ENCODE measurements at regions of chr9 and their contacts with region 1.

Region 1: GRCh38 chr9:109119439-109120203 is at the start of gene TMEM245:
- DNase-seq: peak; percentile 94
- ATAC-seq: peak; percentile 90
- H3K4me3 ChIP-seq: peak within 1 kb of the TSS; percentile 96
- H3K27ac ChIP-seq: peak within 1 kb of the TSS; percentile 77
- H3K4me1 ChIP-seq: peaks cover 20% of the 10 kb centered on the region
- H3K27me3 ChIP-seq: no peaks in the 10 kb centered on the region
- CTCF ChIP-seq: no peak
- total RNA-seq, gene TMEM245: 23.7 and 30.8 TPM in 2 replicates

Region 2: GRCh38 chr9:108727580-108728111 is 392.0 kb before region 1 on chr9:
- CTCF ChIA-PET with region 1: no interaction called
- POLR2A ChIA-PET with region 1: no interaction called
- intact Hi-C with region 1: no loop called
- DNase-seq: no peak
- ATAC-seq: no peak
- H3K4me3 ChIP-seq: no peak overlapping the region
- H3K27ac ChIP-seq: no peak overlapping the region
- H3K4me1 ChIP-seq: no peaks in the 10 kb centered on the region
- H3K27me3 ChIP-seq: no peaks in the 10 kb centered on the region
- CTCF ChIP-seq: no peak

Region 3: DNA sequence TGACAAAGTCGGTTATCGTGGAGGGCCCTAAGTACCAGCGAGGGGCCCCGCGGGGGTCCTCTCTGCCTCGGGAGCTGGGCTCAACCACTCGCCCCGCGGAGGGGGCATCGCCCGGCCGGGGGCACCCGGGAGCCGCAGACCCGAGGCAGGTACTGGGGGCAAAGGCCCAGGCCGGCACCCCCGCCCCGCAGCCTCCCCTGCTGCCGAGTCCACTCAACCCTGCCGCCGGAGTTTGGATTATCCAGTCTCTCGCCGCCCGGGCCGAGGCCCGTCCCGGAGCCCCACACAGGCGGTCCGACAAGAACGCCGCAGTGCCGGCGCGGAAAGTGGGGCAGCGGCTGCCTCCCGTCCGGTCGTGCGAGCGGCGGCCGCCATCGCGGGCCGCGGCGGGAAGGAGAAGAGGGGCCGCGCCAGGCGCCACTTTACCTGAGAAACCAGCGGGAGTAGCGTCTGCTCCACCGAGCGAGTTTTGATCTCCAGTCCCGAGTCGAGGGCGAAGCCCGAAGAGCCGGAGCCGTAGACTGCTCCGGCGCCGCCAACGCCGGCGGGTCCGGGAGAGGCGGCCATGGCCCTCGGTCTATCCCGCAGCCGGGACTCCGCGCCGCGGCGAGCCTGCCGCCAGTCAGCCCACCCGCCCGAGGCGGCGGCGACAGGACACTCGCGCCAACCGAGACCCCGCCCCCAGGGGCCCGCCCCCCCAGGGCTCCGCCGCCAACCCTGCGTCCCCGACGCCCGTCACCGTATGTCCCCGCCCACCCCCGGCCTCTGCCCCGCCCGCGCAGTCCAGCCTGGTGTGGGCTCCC is 106.5 kb before region 1 on chr9 and contains the start of gene CTNNAL1:
- CTCF ChIA-PET with region 1: interaction called, 3 read pairs
- POLR2A ChIA-PET with region 1: no interaction called
- intact Hi-C with region 1: loop called (anchors 5 kb)
- DNase-seq: peak; percentile 78
- ATAC-seq: peak; percentile 74
- H3K4me3 ChIP-seq: peak within 1 kb of the TSS; percentile 92
- H3K27ac ChIP-seq: peak within 1 kb of the TSS; percentile 86
- H3K4me1 ChIP-seq: peaks cover 28% of the 10 kb centered on the region
- H3K27me3 ChIP-seq: no peaks in the 10 kb centered on the region
- CTCF ChIP-seq: no peak
- total RNA-seq, gene CTNNAL1: 80.5 and 97.7 TPM in 2 replicates

Region 4: GRCh38 chr9:109063760-109064159 is 55.9 kb before region 1 on chr9:
- CTCF ChIA-PET with region 1: no interaction called
- POLR2A ChIA-PET with region 1: no interaction called
- intact Hi-C with region 1: loop called (anchors 10 kb)
- DNase-seq: peak; percentile 35
- ATAC-seq: no peak
- H3K4me3 ChIP-seq: no peak overlapping the region
- H3K27ac ChIP-seq: no peak overlapping the region
- H3K4me1 ChIP-seq: peaks cover 30% of the 10 kb centered on the region
- H3K27me3 ChIP-seq: no peaks in the 10 kb centered on the region
- CTCF ChIP-seq: peak; percentile 18; the same call in 1 of the 2 replicates

Region 5: DNA sequence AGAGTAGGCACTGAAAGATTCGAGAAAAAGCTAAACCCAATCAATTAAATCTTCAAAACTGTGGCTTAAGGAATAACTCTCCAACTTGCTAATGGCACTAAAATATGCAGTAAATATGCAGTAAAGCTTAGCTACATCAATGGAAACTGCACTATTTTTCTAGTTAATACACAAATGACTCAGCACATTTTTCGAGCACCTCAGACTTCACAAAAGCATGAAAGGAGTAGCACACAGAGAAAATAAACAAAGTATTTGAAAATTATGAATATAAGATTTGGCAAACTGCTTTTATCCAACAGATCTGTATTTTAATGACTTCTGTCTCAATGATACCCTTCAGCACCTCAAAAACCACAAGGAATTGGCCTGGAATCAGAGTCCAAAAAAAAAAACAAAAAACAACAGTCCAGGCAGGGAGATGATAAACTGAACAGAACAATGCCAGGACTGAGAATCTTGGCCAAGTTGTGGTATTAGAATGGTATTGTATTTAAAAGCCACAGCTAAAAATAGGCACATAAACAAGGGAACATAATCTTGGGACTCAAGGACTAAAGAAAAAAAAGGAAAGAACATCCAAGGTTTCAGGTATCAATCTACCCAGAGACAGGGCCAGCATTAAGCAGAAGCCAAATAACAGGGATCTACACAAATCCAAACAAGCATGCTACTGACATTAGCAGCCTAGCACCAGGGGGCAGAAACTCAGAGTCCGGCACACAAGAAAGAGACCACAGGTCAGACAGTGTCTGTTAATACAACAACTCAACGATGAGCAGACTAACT is 21.3 kb before region 1 on chr9:
- CTCF ChIA-PET with region 1: no interaction called
- POLR2A ChIA-PET with region 1: interaction called, 4 read pairs
- intact Hi-C with region 1: loop called (anchors 2 kb)
- DNase-seq: peak; percentile 51
- ATAC-seq: peak; percentile 58
- H3K4me3 ChIP-seq: no peak overlapping the region
- H3K27ac ChIP-seq: peak overlapping the region; percentile 62
- H3K4me1 ChIP-seq: peaks cover 48% of the 10 kb centered on the region
- H3K27me3 ChIP-seq: no peaks in the 10 kb centered on the region
- CTCF ChIP-seq: peak; percentile 44

Region 6: GRCh38 chr9:109251080-109251775 is 131.6 kb after region 1 on chr9:
- CTCF ChIA-PET with region 1: no interaction called
- POLR2A ChIA-PET with region 1: no interaction called
- intact Hi-C with region 1: loop called (anchors 5 kb)
- DNase-seq: peak; percentile 94
- ATAC-seq: peak; percentile 75
- H3K4me3 ChIP-seq: peak overlapping the region; percentile 51
- H3K27ac ChIP-seq: peak overlapping the region; percentile 100
- H3K4me1 ChIP-seq: peaks cover 60% of the 10 kb centered on the region
- H3K27me3 ChIP-seq: no peaks in the 10 kb centered on the region
- CTCF ChIP-seq: no peak

Region 7: GRCh38 chr9:109320742-109321448 is 201.3 kb after region 1 on chr9 and contains the start of gene EPB41L4B:
- CTCF ChIA-PET with region 1: no interaction called
- POLR2A ChIA-PET with region 1: no interaction called
- intact Hi-C with region 1: loop called (anchors 1 kb)
- DNase-seq: peak; percentile 88
- ATAC-seq: peak; percentile 45
- H3K4me3 ChIP-seq: peak within 1 kb of the TSS; percentile 93
- H3K27ac ChIP-seq: peak within 1 kb of the TSS; percentile 68
- H3K4me1 ChIP-seq: peaks cover 34% of the 10 kb centered on the region
- H3K27me3 ChIP-seq: no peaks in the 10 kb centered on the region
- CTCF ChIP-seq: peak; percentile 78
- total RNA-seq, gene EPB41L4B: 11.2 and 13.8 TPM in 2 replicates

Measured in PC-3 (cell line).